ENCODE measurements at regions of chr1 and their contacts with region 1.

Region 1: DNA sequence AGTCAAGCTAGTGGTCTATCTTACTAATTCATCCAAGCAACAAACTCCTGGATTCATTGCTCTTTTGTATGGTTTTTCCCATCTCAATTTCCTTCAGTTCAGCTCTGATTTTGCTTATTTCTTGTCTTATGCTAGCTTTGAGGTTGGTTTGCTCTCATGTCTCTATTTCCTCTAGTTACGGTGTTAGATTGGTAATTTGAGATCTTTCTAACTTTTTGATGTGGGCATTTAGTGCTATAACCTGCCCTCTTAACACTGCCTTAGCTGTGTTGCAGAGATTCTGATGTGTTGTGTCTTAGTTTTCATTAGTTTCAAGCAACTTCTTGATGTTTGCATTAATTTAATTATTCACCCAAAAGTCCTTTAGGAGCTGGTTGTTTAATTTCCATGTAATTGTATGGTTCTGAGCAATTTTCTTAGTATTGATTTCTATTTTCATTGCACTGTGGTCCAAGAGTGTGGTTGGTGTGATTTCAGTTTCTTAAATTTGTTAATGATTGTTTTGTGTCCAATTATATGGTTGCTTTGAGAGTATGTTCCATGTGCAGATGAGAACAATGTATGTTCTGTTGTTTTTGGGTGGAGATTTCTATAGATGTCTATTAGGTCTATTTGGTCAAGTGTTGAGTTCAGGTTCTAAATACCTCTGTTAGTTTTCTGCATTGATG is 154.6 kb downstream of the PLPPR5 start:
- DNase-seq: no peak
- ATAC-seq: no peak

Region 2: GRCh38 chr1:98813738-98814309 is 36.3 kb before region 1 on chr1:
- intact Hi-C with region 1: loop called in 1 of 2 experiments (anchors 2 kb)
- DNase-seq: no peak
- ATAC-seq: no peak